SK-N-SH (cell line): ENCODE measurements at regions of chrX and their contacts with region 1.

Region 1: GRCh38 chrX:10119399-10119990 is 37.3 kb upstream of the CLCN4 start:
- DNase-seq: peak; percentile 76
- H3K4me3 ChIP-seq: no peak overlapping the region; a peak in 1 of 4 replicates
- H3K27ac ChIP-seq: no peak overlapping the region
- H3K4me1 ChIP-seq: no peaks in the 10 kb centered on the region
- H3K27me3 ChIP-seq: no peaks in the 10 kb centered on the region
- CTCF ChIP-seq: peak; percentile 100
- EP300 ChIP-seq: peak in 1 of 2 experiments; percentile 42; a peak in 1 of 4 replicates
- RAD21 ChIP-seq: peak; percentile 97

Region 2: DNA sequence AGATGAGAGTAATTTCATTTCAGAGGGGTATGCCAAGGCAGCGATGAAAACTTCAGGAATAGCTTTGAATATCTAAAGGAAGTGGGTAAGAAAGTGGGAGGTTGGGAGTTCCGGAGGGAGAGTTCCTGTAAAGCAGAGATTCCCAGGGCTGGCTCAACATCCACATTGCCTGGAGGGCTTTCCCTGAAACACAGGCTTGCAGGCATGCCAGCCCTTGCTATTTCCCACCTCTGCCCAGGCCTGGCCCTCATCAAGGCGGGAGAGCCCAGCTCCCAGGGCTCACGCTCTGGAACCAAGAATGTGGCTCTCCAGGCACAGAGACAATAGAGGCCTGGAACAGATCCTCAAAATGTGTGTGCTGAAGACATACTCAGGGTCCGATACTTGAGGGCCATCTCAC is 196.1 kb before region 1 on chrX:
- CTCF ChIA-PET with region 1: no interaction called
- POLR2A ChIA-PET with region 1: no interaction called
- DNase-seq: no peak
- H3K4me3 ChIP-seq: no peak overlapping the region
- H3K27ac ChIP-seq: no peak overlapping the region
- H3K4me1 ChIP-seq: no peaks in the 10 kb centered on the region
- H3K27me3 ChIP-seq: no peaks in the 10 kb centered on the region
- CTCF ChIP-seq: no peak
- EP300 ChIP-seq: no peak
- RAD21 ChIP-seq: no peak

Region 3: GRCh38 chrX:9983846-9984245 is 135.6 kb before region 1 on chrX:
- CTCF ChIA-PET with region 1: interaction called, 10 read pairs
- POLR2A ChIA-PET with region 1: no interaction called
- DNase-seq: no peak
- H3K4me3 ChIP-seq: no peak overlapping the region
- H3K27ac ChIP-seq: no peak overlapping the region
- H3K4me1 ChIP-seq: no peaks in the 10 kb centered on the region
- H3K27me3 ChIP-seq: no peaks in the 10 kb centered on the region; the same call in 1 of the 2 replicates
- CTCF ChIP-seq: no peak
- EP300 ChIP-seq: no peak
- RAD21 ChIP-seq: no peak

Region 4: GRCh38 chrX:9995855-9996339 is 123.6 kb before region 1 on chrX:
- CTCF ChIA-PET with region 1: interaction called, 40 read pairs
- POLR2A ChIA-PET with region 1: no interaction called
- DNase-seq: peak; percentile 83
- H3K4me3 ChIP-seq: no peak overlapping the region; a peak in 1 of 4 replicates
- H3K27ac ChIP-seq: no peak overlapping the region
- H3K4me1 ChIP-seq: no peaks in the 10 kb centered on the region
- H3K27me3 ChIP-seq: no peaks in the 10 kb centered on the region; the same call in 1 of the 2 replicates
- CTCF ChIP-seq: peak; percentile 81
- EP300 ChIP-seq: no peak
- RAD21 ChIP-seq: peak; percentile 62

Region 5: DNA sequence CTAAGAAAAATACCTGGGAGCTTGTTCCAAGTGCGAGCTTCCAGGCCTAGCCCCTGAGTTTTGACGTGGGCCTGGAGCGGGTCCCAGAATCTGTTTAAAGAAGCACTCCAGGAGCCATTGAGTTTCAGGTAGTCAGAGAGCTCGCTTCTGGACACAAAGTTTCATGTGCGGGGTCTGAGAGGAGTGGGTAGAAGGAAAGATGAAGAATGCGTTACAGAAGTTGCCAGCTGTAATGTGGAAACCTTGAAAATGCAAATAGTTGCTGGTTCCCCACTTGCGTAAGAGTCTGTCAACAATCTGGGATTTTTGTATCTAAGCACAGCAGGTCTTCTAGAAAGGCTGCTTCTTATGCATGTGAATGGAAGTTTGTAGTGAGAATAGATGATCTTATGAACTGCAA is 40.3 kb before region 1 on chrX:
- CTCF ChIA-PET with region 1: no interaction called
- POLR2A ChIA-PET with region 1: no interaction called
- DNase-seq: no peak
- H3K4me3 ChIP-seq: no peak overlapping the region
- H3K27ac ChIP-seq: no peak overlapping the region
- H3K4me1 ChIP-seq: peaks cover 0 to 3% of the 10 kb centered on the region in 2 experiments; a peak in 1 of 4 replicates
- H3K27me3 ChIP-seq: no peaks in the 10 kb centered on the region
- CTCF ChIP-seq: no peak
- EP300 ChIP-seq: no peak
- RAD21 ChIP-seq: no peak